ENCODE measurements at regions of chr10 and their contacts with region 1.

Region 1: DNA sequence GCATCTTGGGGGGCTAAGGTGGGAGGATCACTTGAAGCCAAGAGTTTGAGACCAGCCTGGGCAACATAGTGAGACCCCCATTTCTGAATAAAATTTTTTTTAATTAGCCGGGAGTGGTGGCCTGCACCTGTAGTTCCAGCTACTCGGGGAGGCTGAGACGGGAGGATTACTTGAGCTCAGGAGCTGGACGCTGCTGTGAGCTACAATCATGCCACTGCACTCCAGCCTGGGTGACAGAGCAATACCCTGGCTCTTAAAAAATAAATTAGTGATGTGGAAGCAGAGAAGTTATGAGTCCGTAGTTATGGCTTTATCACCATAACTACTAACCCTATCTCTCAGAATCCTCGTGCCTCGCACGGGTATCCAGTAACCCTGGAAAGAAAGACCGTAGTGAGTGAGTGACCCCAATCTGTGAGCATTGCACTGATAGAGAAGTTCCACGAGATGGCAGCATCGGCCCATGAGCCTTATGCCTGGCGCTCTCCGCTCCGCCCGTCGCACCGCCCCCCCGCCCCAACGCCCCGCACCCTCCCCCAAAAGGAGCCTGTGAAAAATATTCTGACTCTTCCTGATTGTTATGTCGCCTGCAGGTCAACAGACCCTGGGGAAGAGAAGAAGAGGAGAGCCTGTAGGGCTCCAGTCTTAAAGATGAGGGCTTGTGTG is 4.9 kb upstream of the SLC29A3 start:
- DNase-seq: peak in 1 of 2 donors; percentile 72
- H3K4me3 ChIP-seq: no peak overlapping the region
- H3K27ac ChIP-seq: no peak overlapping the region
- H3K4me1 ChIP-seq: peaks cover 0 to 5% of the 10 kb centered on the region in 2 donors
- H3K27me3 ChIP-seq: no peaks in the 10 kb centered on the region
- CTCF ChIP-seq: peak; percentile 77 to 94 (median 87)

Region 2: DNA sequence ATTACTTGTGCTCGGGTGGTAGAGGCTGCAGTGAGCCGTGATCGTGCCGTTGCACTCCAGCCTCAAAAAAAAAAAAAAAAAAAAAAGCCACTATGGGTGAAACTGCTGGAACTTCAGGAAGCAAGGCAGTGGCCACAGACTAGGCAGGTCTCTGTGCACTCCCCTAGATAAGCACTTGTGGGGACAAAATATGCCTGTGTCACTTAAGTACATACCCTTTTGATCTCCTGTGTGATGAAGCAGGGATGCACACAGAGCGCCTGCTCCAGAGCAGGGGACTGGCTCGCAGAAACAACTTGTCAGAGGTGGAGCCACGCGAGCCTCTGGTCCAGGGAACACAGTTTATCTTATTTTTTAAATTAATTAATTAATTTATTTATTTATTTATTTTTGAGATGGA is 579.8 kb after region 1 on chr10:
- intact Hi-C with region 1: loop called (anchors 2 kb)
- DNase-seq: no peak
- H3K4me3 ChIP-seq: no peak overlapping the region
- H3K27ac ChIP-seq: no peak overlapping the region
- H3K4me1 ChIP-seq: no peaks in the 10 kb centered on the region
- H3K27me3 ChIP-seq: no peaks in the 10 kb centered on the region
- CTCF ChIP-seq: no peak

Measured in ascending aorta (tissue), 2 donors.